Activated B cell treated with CpG ODN at 0.5 μM for 24 hours (primary cell): ENCODE measurements at regions of chr12 and their contacts with region 1.

Region 1: GRCh38 chr12:6851921-6852650 is at the start of gene USP5:
- DNase-seq: peak; percentile 91
- ATAC-seq: peak; percentile 78
- H3K4me3 Mint-ChIP-seq: peak within 1 kb of the TSS; percentile 100
- H3K27ac Mint-ChIP-seq: peak within 1 kb of the TSS; percentile 99
- H3K4me1 Mint-ChIP-seq: peaks cover 30% of the 10 kb centered on the region
- H3K27me3 Mint-ChIP-seq: no peaks in the 10 kb centered on the region
- CTCF ChIP-seq: no peak
- total RNA-seq, gene USP5: 108 and 110 TPM in 2 replicates

Region 2: DNA sequence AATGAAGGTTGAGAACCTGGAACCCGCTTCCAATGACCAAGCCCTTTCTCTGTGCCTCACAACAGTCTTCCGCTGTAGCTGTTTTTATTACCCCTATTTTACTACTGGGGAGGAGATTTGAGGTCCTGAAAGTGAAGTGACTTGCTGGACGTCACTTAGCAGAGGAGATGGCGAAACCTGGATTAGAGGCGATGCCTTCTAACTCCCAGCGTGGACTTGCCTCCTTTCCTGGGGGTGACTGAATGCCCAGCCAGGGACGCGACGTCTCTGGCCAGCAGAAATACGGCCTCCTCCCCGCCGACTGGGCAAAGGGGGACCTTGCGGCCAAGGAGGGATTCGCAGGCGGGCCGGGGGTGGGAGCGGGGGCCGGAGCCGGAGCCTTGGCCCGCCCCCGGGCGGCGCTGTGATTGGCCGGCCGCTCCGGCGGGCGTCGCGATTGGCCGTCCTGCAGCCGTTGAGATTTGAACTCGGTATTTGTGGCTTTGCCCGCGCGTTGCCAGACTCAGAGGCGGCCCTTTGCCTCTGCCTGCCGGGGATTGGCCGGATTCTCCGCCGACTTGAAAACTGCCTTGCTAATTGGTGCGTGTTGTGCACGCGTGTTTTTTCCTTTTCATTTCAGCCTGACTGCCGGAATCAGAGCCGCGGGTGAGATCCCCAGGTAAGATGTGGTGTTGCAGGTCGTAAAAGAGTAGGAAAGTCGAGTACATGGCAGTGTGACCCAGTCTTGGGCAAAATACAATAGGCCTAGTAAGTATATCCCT is 358.4 kb before region 1 on chr12 and contains the start of gene NCAPD2:
- CTCF ChIA-PET with region 1: no interaction called
- POLR2A ChIA-PET with region 1: no interaction called
- intact Hi-C with region 1: loop called (anchors 1 kb)
- DNase-seq: peak; percentile 85
- ATAC-seq: peak; percentile 85
- H3K4me3 Mint-ChIP-seq: peak within 1 kb of the TSS; percentile 97
- H3K27ac Mint-ChIP-seq: peak within 1 kb of the TSS; percentile 96
- H3K4me1 Mint-ChIP-seq: peaks cover 28% of the 10 kb centered on the region
- H3K27me3 Mint-ChIP-seq: no peaks in the 10 kb centered on the region
- CTCF ChIP-seq: no peak
- total RNA-seq, gene NCAPD2: 38.4 and 40.9 TPM in 2 replicates

Region 3: GRCh38 chr12:6662906-6663742 is 189.0 kb before region 1 on chr12 and contains the start of gene ING4:
- CTCF ChIA-PET with region 1: no interaction called
- POLR2A ChIA-PET with region 1: no interaction called
- intact Hi-C with region 1: loop called (anchors 1 kb)
- DNase-seq: peak; percentile 80
- ATAC-seq: peak; percentile 97
- H3K4me3 Mint-ChIP-seq: peak within 1 kb of the TSS; percentile 97
- H3K27ac Mint-ChIP-seq: peak within 1 kb of the TSS; percentile 95
- H3K4me1 Mint-ChIP-seq: peaks cover 27% of the 10 kb centered on the region
- H3K27me3 Mint-ChIP-seq: no peaks in the 10 kb centered on the region
- CTCF ChIP-seq: no peak
- total RNA-seq, gene ING4: 31.6 and 39.2 TPM in 2 replicates

Region 4: DNA sequence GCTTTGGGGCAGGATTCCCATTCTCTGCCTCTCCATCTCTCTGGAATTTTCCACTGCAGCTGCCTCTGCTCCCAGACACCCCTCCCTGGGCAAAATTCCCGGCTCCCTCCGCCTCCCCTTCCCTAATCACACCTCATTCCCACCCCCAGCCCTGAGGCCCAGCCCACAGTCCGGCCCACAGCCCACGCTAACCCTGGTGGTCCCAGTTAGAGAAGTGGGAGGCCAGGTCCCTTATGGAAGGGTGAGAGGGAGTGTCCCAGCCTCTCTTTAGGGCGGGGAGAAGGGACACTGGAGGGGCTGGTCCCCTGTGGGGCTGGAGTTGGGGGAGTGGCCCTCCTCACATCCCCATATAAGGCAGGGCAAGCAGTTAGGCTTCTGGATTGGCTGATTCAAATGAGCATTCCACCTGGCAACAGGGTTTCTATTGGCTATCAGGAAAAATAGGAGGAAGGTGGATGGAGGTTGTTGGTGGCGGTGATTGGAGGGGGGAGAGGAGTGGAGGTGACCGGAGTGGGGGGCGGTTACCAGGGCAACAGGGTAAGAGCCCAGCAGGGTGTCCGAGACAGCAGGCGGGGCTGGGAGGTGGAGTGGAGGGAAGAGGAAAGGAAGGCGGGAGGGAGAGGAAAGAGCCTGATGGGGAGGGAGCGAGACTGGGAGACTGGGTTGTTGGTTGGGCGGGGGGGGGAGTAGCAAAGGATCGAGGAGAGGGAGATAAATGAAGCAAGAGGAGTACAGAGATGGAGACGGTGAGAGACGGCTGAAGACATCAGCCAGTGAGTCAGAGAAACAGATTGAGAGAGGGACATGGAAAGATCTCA is 87.9 kb before region 1 on chr12:
- CTCF ChIA-PET with region 1: no interaction called
- POLR2A ChIA-PET with region 1: interaction called, 3 read pairs
- intact Hi-C with region 1: loop called (anchors 1 kb)
- DNase-seq: peak; percentile 26
- ATAC-seq: peak; percentile 83
- H3K4me3 Mint-ChIP-seq: peak overlapping the region; percentile 55
- H3K27ac Mint-ChIP-seq: no peak overlapping the region
- H3K4me1 Mint-ChIP-seq: peaks cover 29% of the 10 kb centered on the region
- H3K27me3 Mint-ChIP-seq: peaks cover 31% of the 10 kb centered on the region
- CTCF ChIP-seq: no peak

Region 5: GRCh38 chr12:6867413-6868210 is 15.5 kb after region 1 on chr12 and contains the start of gene TPI1:
- CTCF ChIA-PET with region 1: interaction called, 34 read pairs
- POLR2A ChIA-PET with region 1: interaction called, 190 read pairs
- intact Hi-C with region 1: loop called (anchors 1 kb)
- DNase-seq: peak; percentile 65
- ATAC-seq: peak; percentile 78
- H3K4me3 Mint-ChIP-seq: peak within 1 kb of the TSS; percentile 89
- H3K27ac Mint-ChIP-seq: peak within 1 kb of the TSS; percentile 84
- H3K4me1 Mint-ChIP-seq: peaks cover 51% of the 10 kb centered on the region
- H3K27me3 Mint-ChIP-seq: no peaks in the 10 kb centered on the region
- CTCF ChIP-seq: no peak
- total RNA-seq, gene TPI1: 306 and 318 TPM in 2 replicates

Region 6: GRCh38 chr12:6937481-6938297 is 85.6 kb after region 1 on chr12:
- CTCF ChIA-PET with region 1: interaction called, 6 read pairs
- POLR2A ChIA-PET with region 1: interaction called, 65 read pairs
- intact Hi-C with region 1: no loop called
- DNase-seq: peak; percentile 84
- ATAC-seq: peak; percentile 92
- H3K4me3 Mint-ChIP-seq: peak overlapping the region; percentile 84
- H3K27ac Mint-ChIP-seq: peak overlapping the region; percentile 91
- H3K4me1 Mint-ChIP-seq: peaks cover 35% of the 10 kb centered on the region
- H3K27me3 Mint-ChIP-seq: no peaks in the 10 kb centered on the region
- CTCF ChIP-seq: no peak

Region 7: DNA sequence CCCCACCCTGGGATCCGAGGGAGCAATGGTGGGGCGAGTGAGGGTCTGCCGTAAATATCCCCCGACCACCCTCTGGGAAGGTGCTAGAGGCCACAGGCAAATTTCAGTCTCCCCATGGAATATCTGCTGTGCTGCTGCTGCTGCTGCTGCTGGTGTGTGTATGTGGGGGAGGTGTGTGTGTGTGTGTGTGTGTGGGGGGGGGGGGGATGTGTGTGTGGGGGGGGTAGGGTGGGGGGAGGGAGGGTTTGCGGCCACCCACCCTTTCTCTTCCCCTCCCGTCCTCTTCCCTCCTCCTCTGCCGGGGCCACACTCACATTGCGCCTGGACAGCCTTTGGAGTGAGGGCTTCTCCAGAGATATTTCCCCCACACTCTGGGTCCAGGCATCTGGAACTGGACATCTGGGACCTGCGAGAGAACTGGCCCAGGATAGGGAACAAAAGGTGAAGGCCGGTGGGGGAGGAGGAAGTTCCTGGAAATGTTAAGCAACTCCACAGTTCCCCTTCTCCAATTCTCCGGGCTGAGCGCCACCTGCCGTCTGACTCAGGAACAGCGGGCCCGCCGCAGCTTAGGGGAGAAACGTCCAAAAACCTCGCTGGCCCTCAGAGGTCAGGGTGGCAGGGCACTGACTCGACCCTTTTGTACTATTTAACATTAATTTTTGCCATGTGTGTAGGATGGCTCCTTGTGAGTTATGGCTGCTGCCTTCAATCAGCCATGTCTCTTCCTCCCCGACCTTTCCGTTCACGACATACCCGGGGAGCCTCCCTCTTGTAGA is 256.9 kb after region 1 on chr12 and contains the start of gene C1RL:
- CTCF ChIA-PET with region 1: interaction called, 4 read pairs
- POLR2A ChIA-PET with region 1: interaction called, 9 read pairs
- intact Hi-C with region 1: loop called (anchors 5 kb)
- DNase-seq: peak; percentile 83
- ATAC-seq: peak; percentile 53
- H3K4me3 Mint-ChIP-seq: peak within 1 kb of the TSS; percentile 92
- H3K27ac Mint-ChIP-seq: peak within 1 kb of the TSS; percentile 94
- H3K4me1 Mint-ChIP-seq: peaks cover 29% of the 10 kb centered on the region
- H3K27me3 Mint-ChIP-seq: no peaks in the 10 kb centered on the region
- CTCF ChIP-seq: peak; percentile 58
- total RNA-seq, gene C1RL: 13.5 and 19.2 TPM in 2 replicates